ENCODE measurements at regions of chr3 and their contacts with region 1.

Region 1: DNA sequence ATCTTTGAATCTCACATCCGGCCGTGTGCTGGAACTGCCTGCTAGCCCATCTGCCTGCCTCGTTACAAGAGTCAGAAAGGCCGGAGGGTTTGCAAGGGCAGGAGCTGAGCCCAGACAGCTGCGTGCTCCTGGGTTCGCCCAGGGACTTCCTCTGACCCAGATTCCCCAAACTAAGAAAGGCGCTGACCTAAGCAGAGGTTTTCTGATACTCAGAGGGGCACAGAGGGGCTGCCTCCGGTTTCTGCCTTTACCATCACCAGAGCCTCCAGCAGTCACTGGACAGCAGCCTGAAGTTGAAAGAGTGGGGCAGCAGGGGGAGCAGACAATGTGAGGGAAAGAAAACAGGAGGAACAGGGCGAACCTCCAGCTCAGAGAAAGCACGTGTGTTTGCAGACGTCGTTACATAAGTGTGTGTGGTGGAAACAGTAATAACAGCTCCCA is 33.4 kb upstream of the RAD18 start:
- DNase-seq: peak in 1 of 2 donors; percentile 94
- H3K4me3 ChIP-seq: no peak overlapping the region
- H3K27ac ChIP-seq: peak overlapping the region; percentile 34
- H3K4me1 ChIP-seq: no peaks in the 10 kb centered on the region
- H3K27me3 ChIP-seq: no peaks in the 10 kb centered on the region
- CTCF ChIP-seq: peak in 1 of 3 experiments; percentile 36
- POLR2A ChIP-seq: no peak

Region 2: DNA sequence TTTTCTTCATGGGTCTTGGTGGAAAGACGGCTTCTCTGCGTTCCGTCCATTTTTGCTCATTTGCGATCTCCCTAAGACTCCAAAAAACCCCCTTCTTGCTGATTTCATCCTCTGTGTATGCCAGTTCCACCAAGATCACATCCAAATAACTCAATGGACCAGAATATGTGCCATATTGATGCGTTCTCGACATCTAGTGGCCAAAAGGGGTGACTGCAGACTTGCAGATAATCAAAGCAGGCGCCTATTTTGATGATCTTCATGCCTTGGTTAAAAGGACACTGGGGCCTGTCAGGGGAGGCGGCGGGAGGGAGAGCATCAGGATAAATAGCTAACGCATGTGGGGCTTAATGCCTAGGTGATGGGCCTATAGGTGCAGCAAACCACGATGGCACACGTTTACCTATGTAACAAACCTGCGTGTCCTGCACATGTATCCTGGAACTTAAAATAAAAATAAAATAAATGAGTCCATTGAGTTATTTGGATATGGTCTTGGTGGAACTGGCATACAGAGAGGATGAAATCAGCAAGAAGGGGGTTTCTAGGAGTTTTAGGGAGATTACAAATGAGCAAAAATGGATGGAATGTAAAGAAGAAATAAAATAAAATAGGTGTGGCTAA is 70.8 kb after region 1 on chr3:
- intact Hi-C with region 1: loop called (anchors 10 kb)
- DNase-seq: no peak
- H3K4me3 ChIP-seq: no peak overlapping the region
- H3K27ac ChIP-seq: no peak overlapping the region
- H3K4me1 ChIP-seq: no peaks in the 10 kb centered on the region
- H3K27me3 ChIP-seq: no peaks in the 10 kb centered on the region
- CTCF ChIP-seq: peak; percentile 30 to 73 (median 65)
- POLR2A ChIP-seq: no peak

Measured in vagina (tissue), 2 donors.